Vagina (tissue), 2 donors: ENCODE measurements at regions of chr7 and their contacts with region 1.

Region 1: DNA sequence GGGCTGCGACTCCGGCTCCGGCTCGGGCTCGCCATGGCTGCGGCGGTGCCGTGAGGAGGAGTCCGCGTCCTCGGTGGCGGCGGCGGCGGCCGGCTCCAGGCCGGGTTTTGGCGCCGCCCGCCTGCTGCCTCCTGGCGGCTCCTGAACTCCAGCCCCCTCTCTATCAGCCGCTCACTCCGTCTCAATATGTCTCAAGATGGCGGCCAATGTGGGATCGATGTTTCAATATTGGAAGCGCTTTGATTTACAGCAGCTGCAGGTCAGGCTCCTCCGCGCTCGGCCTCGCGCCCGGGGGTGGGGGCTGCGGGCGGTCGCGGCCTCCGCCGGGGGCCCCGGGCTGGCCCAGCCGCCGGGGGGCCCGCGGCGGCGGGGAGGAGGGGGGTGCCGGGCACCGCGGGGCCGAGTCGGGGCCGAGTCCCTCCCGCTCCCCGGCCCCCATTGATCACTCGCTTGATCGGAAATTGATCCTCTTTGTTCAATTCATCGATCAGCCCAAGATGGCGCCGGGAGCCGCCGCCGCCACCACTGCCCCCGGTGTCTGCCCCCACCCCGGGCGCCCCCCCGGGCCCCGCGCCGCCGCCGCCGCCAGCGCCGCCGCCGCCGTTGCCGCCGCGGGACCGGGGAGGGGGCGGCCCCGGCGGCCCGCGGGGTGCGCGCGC is 1.5 kb upstream of the CUX1 start:
- DNase-seq: no peak
- H3K4me3 ChIP-seq: peak overlapping the region; percentile 59 to 79
- H3K27ac ChIP-seq: peak overlapping the region; percentile 63
- H3K4me1 ChIP-seq: peaks cover 32% of the 10 kb centered on the region
- H3K27me3 ChIP-seq: no peaks in the 10 kb centered on the region
- CTCF ChIP-seq: no peak
- POLR2A ChIP-seq: peak in 1 of 2 donors; percentile 29

Region 2: GRCh38 chr7:101315336-101315735 is 500.6 kb before region 1 on chr7:
- intact Hi-C with region 1: no loop called
- DNase-seq: no peak
- H3K4me3 ChIP-seq: no peak overlapping the region
- H3K27ac ChIP-seq: no peak overlapping the region
- H3K4me1 ChIP-seq: no peaks in the 10 kb centered on the region
- H3K27me3 ChIP-seq: no peaks in the 10 kb centered on the region
- CTCF ChIP-seq: peak in 1 of 3 experiments; percentile 8
- POLR2A ChIP-seq: no peak

Region 3: GRCh38 chr7:101688183-101688831 is 127.7 kb before region 1 on chr7:
- intact Hi-C with region 1: loop called (anchors 5 kb)
- DNase-seq: no peak
- H3K4me3 ChIP-seq: peak overlapping the region in 1 of 2 donors; percentile 18
- H3K27ac ChIP-seq: no peak overlapping the region
- H3K4me1 ChIP-seq: peaks cover 11% of the 10 kb centered on the region
- H3K27me3 ChIP-seq: no peaks in the 10 kb centered on the region
- CTCF ChIP-seq: peak; percentile 93 to 96 (median 94)
- POLR2A ChIP-seq: no peak

Region 4: DNA sequence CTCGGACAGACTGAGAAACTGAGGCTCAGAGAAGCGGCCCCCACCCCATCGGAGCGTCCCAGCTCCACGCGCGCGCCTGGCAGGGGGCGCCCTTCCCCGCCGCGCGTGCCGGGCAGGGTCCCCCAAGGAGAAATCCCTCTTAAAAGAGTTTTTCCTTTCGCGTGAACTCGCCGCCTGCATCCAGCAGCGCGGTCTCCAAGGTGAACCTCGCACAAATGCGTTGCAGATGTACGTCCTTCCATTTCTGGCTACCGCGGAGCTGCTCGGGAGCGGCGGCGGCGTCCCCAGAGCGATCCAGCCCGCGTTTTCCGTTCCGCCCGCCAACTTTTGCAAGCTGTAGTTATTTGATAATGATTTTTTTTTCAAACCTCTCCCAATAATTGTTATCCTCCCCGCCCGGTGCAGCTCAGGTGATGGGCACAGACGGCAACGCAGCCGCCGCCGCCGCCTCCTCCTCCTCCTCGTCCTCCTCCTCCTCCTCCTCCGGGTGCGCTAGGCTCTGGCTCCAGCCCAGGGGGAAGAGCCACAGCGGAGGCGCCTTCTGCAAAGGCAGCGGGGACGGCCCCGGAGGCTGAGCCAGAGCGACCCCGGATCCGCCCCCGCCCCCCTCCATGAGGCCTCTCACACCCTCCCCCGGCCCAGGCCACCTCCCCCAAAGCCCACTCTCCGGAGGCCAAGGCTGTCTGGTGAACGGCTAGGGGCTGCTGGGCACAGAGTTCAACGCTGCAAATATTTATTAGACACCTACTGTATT is 72.5 kb before region 1 on chr7:
- intact Hi-C with region 1: loop called (anchors 10 kb)
- DNase-seq: no peak
- H3K4me3 ChIP-seq: peak overlapping the region; percentile 38 to 50
- H3K27ac ChIP-seq: no peak overlapping the region
- H3K4me1 ChIP-seq: peaks cover 13% of the 10 kb centered on the region
- H3K27me3 ChIP-seq: no peaks in the 10 kb centered on the region
- CTCF ChIP-seq: peak in 2 of 3 experiments; percentile 27 to 59
- POLR2A ChIP-seq: no peak

Region 5: GRCh38 chr7:101838837-101839483 is 23.0 kb after region 1 on chr7:
- intact Hi-C with region 1: no loop called
- DNase-seq: no peak
- H3K4me3 ChIP-seq: no peak overlapping the region
- H3K27ac ChIP-seq: no peak overlapping the region
- H3K4me1 ChIP-seq: peaks cover 4% of the 10 kb centered on the region
- H3K27me3 ChIP-seq: no peaks in the 10 kb centered on the region
- CTCF ChIP-seq: no peak
- POLR2A ChIP-seq: no peak

Region 6: DNA sequence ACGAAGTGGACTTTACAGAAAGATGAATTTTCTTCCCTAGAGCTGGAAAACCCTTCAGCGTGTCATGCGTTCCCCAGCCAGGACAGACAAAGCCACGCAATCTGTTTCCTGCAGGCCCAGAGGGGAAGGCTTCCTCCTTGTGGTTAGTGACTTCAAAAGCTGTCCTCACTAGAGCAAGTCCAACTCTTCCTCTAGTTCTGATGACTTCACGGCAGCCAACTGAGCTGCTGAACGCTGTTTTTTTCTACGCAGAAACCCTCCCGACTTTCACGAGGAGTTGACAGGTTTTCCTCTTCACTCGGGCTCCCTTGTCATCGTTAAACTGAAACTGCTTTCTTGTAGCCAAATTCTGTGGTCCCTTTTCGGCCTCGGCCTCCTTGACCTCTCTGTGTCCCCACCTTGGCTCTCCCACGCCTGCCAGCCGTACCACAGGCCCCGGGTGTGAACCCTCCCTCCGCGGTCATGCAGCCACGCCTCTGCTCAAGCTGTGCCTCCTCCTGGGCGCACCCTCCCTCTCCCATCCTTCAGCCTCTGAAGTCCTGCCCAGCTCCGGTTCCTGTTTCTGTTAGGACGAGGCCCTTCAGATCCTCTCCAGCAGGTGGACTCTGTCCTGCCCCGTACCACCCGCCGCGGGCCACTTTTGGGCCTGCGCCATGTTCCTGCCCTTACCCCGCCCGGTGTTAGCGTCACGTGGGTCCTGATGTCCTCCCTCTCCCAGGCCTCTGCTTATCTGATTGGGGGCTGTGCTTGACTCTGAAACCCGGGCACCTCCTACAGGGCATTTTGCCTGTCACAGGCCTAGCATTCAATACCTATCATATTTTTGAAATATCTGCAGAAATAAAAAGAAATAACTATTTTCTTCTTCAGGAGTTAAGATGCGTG is 40.8 kb after region 1 on chr7:
- intact Hi-C with region 1: loop called (anchors 5 kb)
- DNase-seq: peak in 1 of 2 donors; percentile 96
- H3K4me3 ChIP-seq: peak overlapping the region; percentile 35 to 47
- H3K27ac ChIP-seq: peak overlapping the region; percentile 87
- H3K4me1 ChIP-seq: peaks cover 37% of the 10 kb centered on the region
- H3K27me3 ChIP-seq: no peaks in the 10 kb centered on the region
- CTCF ChIP-seq: peak in 1 of 3 experiments; percentile 63
- POLR2A ChIP-seq: no peak

Region 7: GRCh38 chr7:101891936-101892640 is 76.1 kb after region 1 on chr7:
- intact Hi-C with region 1: loop called (anchors 2 kb)
- DNase-seq: no peak
- H3K4me3 ChIP-seq: no peak overlapping the region
- H3K27ac ChIP-seq: no peak overlapping the region
- H3K4me1 ChIP-seq: no peaks in the 10 kb centered on the region
- H3K27me3 ChIP-seq: no peaks in the 10 kb centered on the region
- CTCF ChIP-seq: no peak
- POLR2A ChIP-seq: no peak

Region 8: GRCh38 chr7:101936611-101937231 is 120.8 kb after region 1 on chr7:
- intact Hi-C with region 1: loop called (anchors 10 kb)
- DNase-seq: no peak
- H3K4me3 ChIP-seq: peak overlapping the region; percentile 38 to 39
- H3K27ac ChIP-seq: peak overlapping the region; percentile 65
- H3K4me1 ChIP-seq: peaks cover 60% of the 10 kb centered on the region
- H3K27me3 ChIP-seq: no peaks in the 10 kb centered on the region
- CTCF ChIP-seq: no peak
- POLR2A ChIP-seq: no peak

Region 9: DNA sequence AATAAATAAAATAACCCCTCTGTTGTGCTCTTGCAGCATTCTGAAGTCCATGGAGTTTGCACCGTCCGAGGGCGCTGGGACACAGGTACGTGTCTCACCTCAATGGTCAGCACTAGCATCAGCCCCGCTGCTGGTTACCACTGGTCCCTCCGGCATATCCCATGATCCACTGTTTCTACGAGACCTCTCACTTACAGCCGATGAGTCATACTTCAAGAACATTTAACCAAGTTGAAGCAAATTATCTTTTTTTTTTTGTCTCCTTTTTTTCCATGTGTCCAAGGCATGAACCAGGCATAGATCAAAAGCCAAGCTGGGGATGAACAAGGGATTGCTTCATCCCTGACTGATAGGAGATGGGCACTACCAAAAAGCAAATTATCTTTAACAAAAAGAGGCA is 377.8 kb after region 1 on chr7:
- intact Hi-C with region 1: no loop called
- DNase-seq: no peak
- H3K4me3 ChIP-seq: no peak overlapping the region
- H3K27ac ChIP-seq: no peak overlapping the region
- H3K4me1 ChIP-seq: no peaks in the 10 kb centered on the region
- H3K27me3 ChIP-seq: no peaks in the 10 kb centered on the region
- CTCF ChIP-seq: no peak
- POLR2A ChIP-seq: no peak